ENCODE measurements at regions of chr1 and their contacts with region 1.

Region 1: GRCh38 chr1:157310401-157310800 is 172.2 kb upstream of the ETV3 start:
- DNase-seq: no peak
- H3K4me3 ChIP-seq: no peak overlapping the region
- H3K4me3 Mint-ChIP-seq: no peak overlapping the region
- H3K27ac Mint-ChIP-seq: no peak overlapping the region
- H3K4me1 ChIP-seq: no peaks in the 10 kb centered on the region; the same call in 1 of the 2 replicates
- H3K4me1 Mint-ChIP-seq: peaks cover 12% of the 10 kb centered on the region
- H3K27me3 ChIP-seq: no peaks in the 10 kb centered on the region
- H3K27me3 Mint-ChIP-seq: no peaks in the 10 kb centered on the region
- CTCF ChIP-seq: no peak

Region 2: DNA sequence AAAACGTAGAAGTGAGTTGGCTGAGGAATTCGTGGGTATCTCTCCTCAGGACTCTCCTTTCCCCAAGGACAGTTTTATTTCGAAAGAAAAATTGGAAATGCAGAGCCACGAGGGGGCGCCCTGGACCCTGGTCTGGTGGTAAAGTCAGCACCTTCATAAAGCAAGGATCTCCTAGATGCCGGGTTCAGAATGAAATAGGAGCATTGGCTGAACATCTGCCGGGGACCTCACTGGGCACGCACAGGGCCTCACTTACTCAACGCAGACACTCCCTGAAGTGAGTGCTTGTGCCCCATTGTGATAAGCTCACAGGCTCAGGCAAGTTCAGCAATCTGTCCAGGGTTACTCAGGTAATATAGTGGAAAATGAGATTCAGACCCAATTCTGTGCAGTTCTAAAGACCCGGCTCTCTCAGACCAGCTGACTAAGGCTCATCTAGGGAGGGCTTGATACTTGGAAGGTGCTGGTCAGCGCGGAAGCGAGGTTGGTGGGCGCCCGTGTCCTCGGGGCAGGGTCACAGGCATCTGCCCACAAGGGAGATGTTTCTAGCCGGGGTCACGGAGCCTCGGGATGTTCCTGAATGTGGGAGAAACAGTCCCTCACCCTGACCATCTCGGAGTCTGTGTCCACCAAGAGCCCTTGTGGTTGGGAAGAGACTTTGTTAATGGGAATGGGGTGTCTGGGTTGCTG is 116.6 kb before region 1 on chr1:
- CTCF ChIA-PET with region 1: no interaction called
- POLR2A ChIA-PET with region 1: no interaction called
- intact Hi-C with region 1: loop called (anchors 2 kb)
- DNase-seq: peak; percentile 80 to 85
- H3K4me3 ChIP-seq: no peak overlapping the region
- H3K4me3 Mint-ChIP-seq: no peak overlapping the region
- H3K27ac Mint-ChIP-seq: no peak overlapping the region
- H3K4me1 ChIP-seq: peaks cover 8% of the 10 kb centered on the region; the same call in 1 of the 2 replicates
- H3K4me1 Mint-ChIP-seq: no peaks in the 10 kb centered on the region
- H3K27me3 ChIP-seq: no peaks in the 10 kb centered on the region
- H3K27me3 Mint-ChIP-seq: no peaks in the 10 kb centered on the region
- CTCF ChIP-seq: peak; percentile 79 to 84

Region 3: DNA sequence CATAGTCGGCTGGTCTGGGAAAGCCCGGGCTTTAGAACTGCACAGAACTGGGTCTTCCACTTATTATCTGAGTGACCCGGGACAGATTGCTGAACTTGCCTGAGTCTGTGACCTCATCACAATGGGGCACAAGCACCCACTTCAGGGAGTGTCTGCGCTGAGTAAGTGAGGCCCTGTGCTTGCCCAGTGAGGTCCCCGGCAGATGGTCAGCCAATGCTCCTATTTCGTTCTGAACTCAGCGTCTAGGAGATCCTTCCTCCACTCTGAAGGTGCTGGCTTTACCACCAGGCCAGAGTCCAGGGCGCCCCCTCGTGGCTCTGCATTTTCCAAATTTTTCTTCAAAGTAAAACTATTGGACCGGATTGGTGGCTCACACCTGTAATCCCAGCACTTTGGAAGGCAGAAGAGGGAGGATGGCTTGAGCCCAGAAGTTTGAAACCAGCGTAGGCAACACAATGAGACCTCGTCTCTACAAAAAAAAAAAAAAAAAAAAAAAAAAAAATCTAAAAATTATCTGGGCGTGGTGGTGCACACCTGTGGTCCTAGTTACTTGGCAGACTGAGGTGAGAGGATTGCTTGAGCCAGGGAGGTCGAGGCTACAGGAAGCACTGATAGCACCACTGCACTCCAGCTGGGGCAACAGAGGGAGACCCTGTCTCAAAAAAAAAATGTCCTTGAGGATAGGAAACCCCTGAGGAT is 180.2 kb after region 1 on chr1:
- CTCF ChIA-PET with region 1: interaction called, 3 read pairs
- POLR2A ChIA-PET with region 1: no interaction called
- intact Hi-C with region 1: loop called (anchors 1 kb)
- DNase-seq: peak; percentile 71 to 79
- H3K4me3 ChIP-seq: no peak overlapping the region
- H3K4me3 Mint-ChIP-seq: no peak overlapping the region
- H3K27ac Mint-ChIP-seq: no peak overlapping the region
- H3K4me1 ChIP-seq: peaks cover under 1% of the 10 kb centered on the region; the same call in 1 of the 2 replicates
- H3K4me1 Mint-ChIP-seq: peaks cover 21% of the 10 kb centered on the region
- H3K27me3 ChIP-seq: no peaks in the 10 kb centered on the region
- H3K27me3 Mint-ChIP-seq: no peaks in the 10 kb centered on the region
- CTCF ChIP-seq: peak; percentile 65 to 75

Region 4: GRCh38 chr1:157496121-157496526 is 185.7 kb after region 1 on chr1:
- CTCF ChIA-PET with region 1: interaction called, 3 read pairs
- POLR2A ChIA-PET with region 1: no interaction called
- intact Hi-C with region 1: loop called (anchors 1 kb)
- DNase-seq: peak; percentile 64 to 79
- H3K4me3 ChIP-seq: no peak overlapping the region
- H3K4me3 Mint-ChIP-seq: no peak overlapping the region
- H3K27ac Mint-ChIP-seq: peak overlapping the region; percentile 75
- H3K4me1 ChIP-seq: peaks cover 40% of the 10 kb centered on the region
- H3K4me1 Mint-ChIP-seq: peaks cover 44% of the 10 kb centered on the region
- H3K27me3 ChIP-seq: no peaks in the 10 kb centered on the region
- H3K27me3 Mint-ChIP-seq: no peaks in the 10 kb centered on the region
- CTCF ChIP-seq: peak; percentile 71 to 80

Region 5: DNA sequence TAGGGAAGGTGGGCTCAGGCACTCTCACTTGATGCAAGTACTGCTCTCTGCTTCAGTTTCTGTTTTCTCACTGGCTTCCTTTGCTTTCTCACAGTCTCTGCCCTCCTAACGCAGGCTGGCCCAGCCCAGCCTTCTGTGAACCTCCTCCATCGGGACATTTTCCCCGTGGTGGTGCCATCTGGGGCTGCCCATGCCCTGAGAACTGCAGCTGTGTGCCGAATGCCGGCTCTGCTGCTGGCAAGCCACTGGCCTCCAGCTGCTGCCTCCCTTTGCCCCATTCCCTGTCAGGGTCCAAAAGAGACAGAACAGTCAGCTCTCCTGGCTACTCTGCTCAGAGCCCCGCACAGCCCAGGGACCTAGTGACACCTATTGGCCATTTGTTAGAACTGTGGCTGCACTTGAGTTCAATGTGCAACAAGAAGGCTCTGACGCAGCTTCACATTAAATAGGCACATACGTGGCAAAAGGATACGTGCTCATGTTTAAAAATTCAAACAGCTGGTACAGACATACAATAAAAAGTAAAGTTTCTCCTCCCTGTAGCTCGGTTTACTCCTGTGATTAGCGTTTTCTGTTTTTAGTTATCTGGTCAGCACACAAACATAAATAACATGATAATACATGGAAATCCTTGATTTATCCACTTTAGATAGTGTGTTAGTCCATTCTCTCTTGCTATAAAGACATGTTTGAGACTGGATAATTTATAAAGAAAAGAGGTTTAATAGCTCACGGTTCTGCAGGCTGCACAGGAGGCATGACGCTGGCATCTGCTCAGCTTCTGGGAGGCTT is 195.3 kb after region 1 on chr1:
- CTCF ChIA-PET with region 1: interaction called, 10 read pairs
- POLR2A ChIA-PET with region 1: no interaction called
- intact Hi-C with region 1: loop called (anchors 1 kb)
- DNase-seq: peak; percentile 63 to 73
- H3K4me3 ChIP-seq: no peak overlapping the region
- H3K4me3 Mint-ChIP-seq: no peak overlapping the region
- H3K27ac Mint-ChIP-seq: no peak overlapping the region
- H3K4me1 ChIP-seq: peaks cover 26% of the 10 kb centered on the region
- H3K4me1 Mint-ChIP-seq: peaks cover 14% of the 10 kb centered on the region
- H3K27me3 ChIP-seq: no peaks in the 10 kb centered on the region
- H3K27me3 Mint-ChIP-seq: no peaks in the 10 kb centered on the region
- CTCF ChIP-seq: peak; percentile 65 to 84

Region 6: GRCh38 chr1:157691285-157691920 is 381.0 kb after region 1 on chr1:
- CTCF ChIA-PET with region 1: interaction called, 6 read pairs
- POLR2A ChIA-PET with region 1: no interaction called
- intact Hi-C with region 1: loop called (anchors 1 kb)
- DNase-seq: peak in 1 of 2 experiments; percentile 30
- H3K4me3 ChIP-seq: no peak overlapping the region
- H3K4me3 Mint-ChIP-seq: no peak overlapping the region
- H3K27ac Mint-ChIP-seq: no peak overlapping the region
- H3K4me1 ChIP-seq: no peaks in the 10 kb centered on the region
- H3K4me1 Mint-ChIP-seq: no peaks in the 10 kb centered on the region
- H3K27me3 ChIP-seq: no peaks in the 10 kb centered on the region
- H3K27me3 Mint-ChIP-seq: peaks cover 10% of the 10 kb centered on the region
- CTCF ChIP-seq: peak; percentile 56 to 64